Ovary (tissue), 10 donors: ENCODE measurements at regions of chr5 and their contacts with region 1.

Region 1: GRCh38 chr5:26009742-26010141 is 1028.6 kb downstream of the CDH9 start:
- DNase-seq: no peak
- H3K4me3 ChIP-seq: no peak overlapping the region
- H3K27ac ChIP-seq: no peak overlapping the region
- H3K4me1 ChIP-seq: no peaks in the 10 kb centered on the region
- H3K27me3 ChIP-seq: no peaks in the 10 kb centered on the region
- CTCF ChIP-seq: no peak
- EP300 ChIP-seq: no peak
- POLR2A ChIP-seq: no peak

Region 2: DNA sequence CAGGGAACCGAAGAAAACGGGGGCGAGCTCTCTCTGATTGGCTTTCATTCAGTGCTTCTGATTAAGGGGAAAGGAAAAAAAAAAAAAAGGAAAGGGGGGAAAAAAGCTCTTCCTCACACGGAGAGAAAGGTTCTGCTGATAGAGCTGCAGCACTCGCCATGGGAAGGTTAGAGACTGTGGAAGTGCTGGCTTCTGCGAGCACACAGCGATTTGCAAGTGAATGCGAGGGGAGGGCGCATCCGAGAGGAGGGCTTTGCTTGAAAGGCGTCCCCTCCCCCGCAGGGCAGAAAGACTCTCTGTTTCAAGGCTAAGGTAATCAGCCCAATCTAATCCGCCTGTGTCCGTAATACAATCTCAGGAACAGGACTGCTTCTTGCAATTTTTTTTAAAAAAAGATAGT is 1365.0 kb before region 1 on chr5 and contains the start of gene CDH10:
- intact Hi-C with region 1: loop called in 1 of 4 experiments (anchors 5 kb)
- DNase-seq: no peak
- H3K4me3 ChIP-seq: no peak within 1 kb of the TSS
- H3K27ac ChIP-seq: no peak within 1 kb of the TSS
- H3K4me1 ChIP-seq: no peaks in the 10 kb centered on the region
- H3K27me3 ChIP-seq: no peaks in the 10 kb centered on the region
- CTCF ChIP-seq: no peak
- EP300 ChIP-seq: no peak
- POLR2A ChIP-seq: no peak
- total RNA-seq, gene CDH10: 0.08 to 0.22 (median 0.15) TPM in 3 of 7 donors, not detected in the others